ENCODE measurements at regions of chr1 and their contacts with region 1.

Region 1: GRCh38 chr1:171801487-171801891 is 20.0 kb downstream of the METTL13 start:
- DNase-seq: no peak
- ATAC-seq: no peak
- H3K4me3 Mint-ChIP-seq: no peak overlapping the region
- H3K27ac Mint-ChIP-seq: peak overlapping the region; percentile 7
- H3K4me1 Mint-ChIP-seq: peaks cover 10% of the 10 kb centered on the region
- H3K27me3 Mint-ChIP-seq: no peaks in the 10 kb centered on the region

Region 2: GRCh38 chr1:171781176-171781875 is 20.2 kb before region 1 on chr1 and contains the start of gene METTL13:
- CTCF ChIA-PET with region 1: interaction called, 11 read pairs
- DNase-seq: peak; percentile 99
- ATAC-seq: peak; percentile 96
- H3K4me3 Mint-ChIP-seq: peak within 1 kb of the TSS; percentile 99
- H3K27ac Mint-ChIP-seq: peak within 1 kb of the TSS; percentile 99
- H3K4me1 Mint-ChIP-seq: peaks cover 59% of the 10 kb centered on the region
- H3K27me3 Mint-ChIP-seq: no peaks in the 10 kb centered on the region
- total RNA-seq, gene METTL13: 47.0 to 56.4 TPM

Region 3: GRCh38 chr1:171811672-171812071 is 10.2 kb after region 1 on chr1:
- CTCF ChIA-PET with region 1: interaction called, 12 read pairs
- DNase-seq: no peak
- ATAC-seq: no peak
- H3K4me3 Mint-ChIP-seq: no peak overlapping the region
- H3K27ac Mint-ChIP-seq: no peak overlapping the region
- H3K4me1 Mint-ChIP-seq: peaks cover 6% of the 10 kb centered on the region
- H3K27me3 Mint-ChIP-seq: no peaks in the 10 kb centered on the region

Region 4: DNA sequence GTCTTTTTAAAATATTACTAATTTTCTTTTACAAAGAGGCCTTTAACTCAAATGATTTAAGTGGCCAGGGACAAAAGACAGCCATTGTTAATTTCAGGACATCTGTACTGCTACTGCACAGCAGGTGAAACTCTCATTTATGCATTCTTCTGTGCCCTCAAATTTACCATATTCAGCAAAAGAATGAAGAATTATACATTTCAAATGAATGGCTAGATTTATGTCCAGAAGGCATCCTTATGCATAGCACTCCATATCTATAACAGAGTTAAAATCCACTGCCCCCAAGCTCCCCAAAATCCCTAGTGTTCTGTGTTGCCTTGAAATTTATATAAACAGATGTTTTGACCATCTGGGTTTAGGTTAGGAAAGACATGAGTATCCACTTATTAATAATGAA is 242.4 kb after region 1 on chr1:
- CTCF ChIA-PET with region 1: no interaction called
- DNase-seq: no peak
- ATAC-seq: no peak
- H3K4me3 Mint-ChIP-seq: no peak overlapping the region
- H3K27ac Mint-ChIP-seq: no peak overlapping the region
- H3K4me1 Mint-ChIP-seq: peaks cover 3% of the 10 kb centered on the region
- H3K27me3 Mint-ChIP-seq: no peaks in the 10 kb centered on the region

Measured in activated CD8-positive, alpha-beta memory T cell treated with anti-CD3 and anti-CD28 coated beads, Interleukin-2, amount 10 ng/mL, durations not matched to agents 7 days and 5 days (primary cell).